ENCODE measurements at regions of chr22 and their contacts with region 1.

Region 1: DNA sequence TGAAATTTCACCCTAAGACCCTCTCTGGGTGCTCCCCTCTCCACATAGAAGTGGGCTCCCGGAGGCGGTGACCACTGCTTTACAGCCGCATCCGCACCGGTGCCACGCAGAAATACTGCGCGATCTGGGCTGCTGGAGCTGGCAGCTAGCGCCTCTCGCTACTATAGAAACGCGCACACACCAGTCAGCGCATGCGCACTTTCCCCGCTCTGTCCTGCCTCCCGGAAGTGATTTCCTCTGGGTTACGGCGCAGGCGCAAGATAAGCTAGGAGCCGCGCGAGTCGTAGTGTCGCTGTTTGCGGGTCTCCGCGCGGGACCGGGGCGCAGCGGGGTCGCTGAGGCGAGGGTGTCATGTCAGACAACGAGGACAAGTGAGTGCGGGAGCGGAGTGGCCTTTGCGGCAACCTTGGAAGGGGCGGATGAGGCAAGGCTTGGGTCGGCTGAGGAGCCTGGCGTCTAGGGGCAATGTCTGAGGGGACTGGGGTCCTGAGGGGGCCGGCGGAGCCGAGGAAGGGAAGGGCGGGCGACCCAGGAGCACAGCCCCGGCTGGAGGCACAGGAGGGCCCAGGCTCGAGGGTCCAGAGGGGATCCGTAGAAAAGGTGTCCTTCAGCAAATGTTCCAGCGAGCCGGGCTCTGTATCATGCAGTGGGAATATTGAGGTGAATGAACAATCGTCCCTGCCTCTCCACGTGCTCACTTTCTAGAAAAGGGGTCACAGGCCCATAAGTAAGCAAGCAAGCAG is at the starts of genes C22orf23 and POLR2F:
- DNase-seq: peak; percentile 91 to 99 (median 96)
- ATAC-seq: peak; percentile 96
- H3K4me3 ChIP-seq: peak within 1 kb of the TSS; percentile 95
- H3K4me3 Mint-ChIP-seq: peak within 1 kb of the TSS; percentile 100
- H3K27ac ChIP-seq: peak within 1 kb of the TSS; percentile 11 to 41
- H3K27ac Mint-ChIP-seq: peak within 1 kb of the TSS; percentile 92
- H3K4me1 ChIP-seq: peaks cover 25% of the 10 kb centered on the region
- H3K4me1 Mint-ChIP-seq: peaks cover 50% of the 10 kb centered on the region
- H3K27me3 ChIP-seq: peaks cover 5 to 7% of the 10 kb centered on the region in 2 experiments
- H3K27me3 Mint-ChIP-seq: peaks cover 19% of the 10 kb centered on the region
- CTCF ChIP-seq: no peak
- total RNA-seq, gene C22orf23: not detected
- total RNA-seq, gene POLR2F: 20.2 to 21.1 TPM

Region 2: DNA sequence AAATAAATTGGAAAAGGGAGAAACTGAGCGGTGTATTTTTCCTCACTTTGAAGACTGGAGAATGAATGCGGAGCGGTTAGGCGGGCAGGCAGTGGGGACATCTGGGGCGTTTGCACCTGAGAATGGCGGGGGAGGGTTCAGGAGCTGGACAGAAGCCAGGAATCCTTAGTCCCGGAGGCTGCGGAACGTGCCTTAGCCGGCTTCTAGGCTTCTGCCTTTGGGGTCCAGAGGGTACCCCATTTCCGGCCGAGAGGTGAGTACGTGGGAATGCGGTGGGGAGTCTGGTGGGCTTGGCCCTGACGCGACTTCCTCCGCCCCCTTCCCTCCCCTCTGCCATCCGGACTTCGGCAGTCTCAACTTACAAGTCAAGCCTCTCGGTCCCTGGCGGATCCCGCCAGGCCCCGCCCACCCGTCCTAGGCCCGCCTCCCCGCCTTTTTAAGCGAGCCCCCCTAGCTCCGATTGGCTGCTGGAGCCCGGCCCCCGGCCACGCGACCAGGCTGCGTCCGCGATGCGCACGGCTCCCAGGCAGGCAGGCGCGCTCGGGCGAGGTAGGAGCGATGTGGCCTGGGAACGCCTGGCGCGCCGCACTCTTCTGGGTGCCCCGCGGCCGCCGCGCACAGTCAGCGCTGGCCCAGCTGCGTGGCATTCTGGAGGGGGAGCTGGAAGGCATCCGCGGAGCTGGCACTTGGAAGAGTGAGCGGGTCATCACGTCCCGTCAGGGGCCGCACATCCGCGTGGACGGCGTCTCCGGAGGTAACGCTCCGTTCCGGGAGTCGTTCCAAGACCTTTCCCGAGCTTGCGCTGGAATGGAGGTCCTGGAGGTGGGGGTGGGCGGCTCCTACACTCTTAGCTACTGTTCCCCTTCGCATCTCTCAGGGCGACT is 146.0 kb before region 1 on chr22 and contains the start of gene GCAT:
- CTCF ChIA-PET with region 1: no interaction called
- POLR2A ChIA-PET with region 1: interaction called, 5 read pairs
- intact Hi-C with region 1: loop called in 1 of 2 experiments (anchors 5 kb)
- DNase-seq: peak; percentile 61 to 96 (median 79)
- ATAC-seq: peak; percentile 81
- H3K4me3 ChIP-seq: peak within 1 kb of the TSS; percentile 58
- H3K4me3 Mint-ChIP-seq: peak within 1 kb of the TSS; percentile 84
- H3K27ac ChIP-seq: no peak within 1 kb of the TSS
- H3K27ac Mint-ChIP-seq: no peak within 1 kb of the TSS
- H3K4me1 ChIP-seq: peaks cover 61% of the 10 kb centered on the region
- H3K4me1 Mint-ChIP-seq: peaks cover 46% of the 10 kb centered on the region
- H3K27me3 ChIP-seq: peaks cover 50 to 66% of the 10 kb centered on the region in 2 experiments
- H3K27me3 Mint-ChIP-seq: peaks cover 43% of the 10 kb centered on the region
- CTCF ChIP-seq: no peak
- total RNA-seq, gene GCAT: 1.4 to 1.8 TPM

Region 3: GRCh38 chr22:37849089-37849751 is 104.4 kb before region 1 on chr22 and contains the start of gene EIF3L:
- CTCF ChIA-PET with region 1: no interaction called
- POLR2A ChIA-PET with region 1: interaction called, 4 read pairs
- intact Hi-C with region 1: loop called in 1 of 2 experiments (anchors 5 kb)
- DNase-seq: peak; percentile 77 to 92 (median 84)
- ATAC-seq: peak; percentile 63
- H3K4me3 ChIP-seq: peak within 1 kb of the TSS; percentile 83
- H3K4me3 Mint-ChIP-seq: peak within 1 kb of the TSS; percentile 90
- H3K27ac ChIP-seq: peak within 1 kb of the TSS; percentile 78 to 89
- H3K27ac Mint-ChIP-seq: peak within 1 kb of the TSS; percentile 97
- H3K4me1 ChIP-seq: peaks cover 31% of the 10 kb centered on the region
- H3K4me1 Mint-ChIP-seq: peaks cover 51% of the 10 kb centered on the region
- H3K27me3 ChIP-seq: no peaks in the 10 kb centered on the region
- H3K27me3 Mint-ChIP-seq: no peaks in the 10 kb centered on the region
- CTCF ChIP-seq: no peak
- total RNA-seq, gene EIF3L: 525 to 541 TPM

Region 4: GRCh38 chr22:37905534-37906363 is 47.9 kb before region 1 on chr22 and contains the start of gene MICALL1:
- CTCF ChIA-PET with region 1: interaction called, 3 read pairs
- POLR2A ChIA-PET with region 1: interaction called, 10 read pairs
- intact Hi-C with region 1: loop called in 1 of 2 experiments (anchors 5 kb)
- DNase-seq: peak; percentile 31 to 88 (median 69)
- ATAC-seq: peak; percentile 78
- H3K4me3 ChIP-seq: peak within 1 kb of the TSS; percentile 60
- H3K4me3 Mint-ChIP-seq: peak within 1 kb of the TSS; percentile 91
- H3K27ac ChIP-seq: peak within 1 kb of the TSS; percentile 55 to 64
- H3K27ac Mint-ChIP-seq: peak within 1 kb of the TSS; percentile 87
- H3K4me1 ChIP-seq: peaks cover 22% of the 10 kb centered on the region
- H3K4me1 Mint-ChIP-seq: peaks cover 28% of the 10 kb centered on the region
- H3K27me3 ChIP-seq: no peaks in the 10 kb centered on the region
- H3K27me3 Mint-ChIP-seq: no peaks in the 10 kb centered on the region
- CTCF ChIP-seq: no peak
- total RNA-seq, gene MICALL1: 16.9 to 20.7 TPM

Region 5: GRCh38 chr22:38114484-38115398 is 161.1 kb after region 1 on chr22:
- CTCF ChIA-PET with region 1: no interaction called
- POLR2A ChIA-PET with region 1: no interaction called
- intact Hi-C with region 1: no loop called
- DNase-seq: peak; percentile 50 to 83 (median 71)
- ATAC-seq: peak; percentile 95
- H3K4me3 ChIP-seq: no peak overlapping the region
- H3K4me3 Mint-ChIP-seq: no peak overlapping the region
- H3K27ac ChIP-seq: no peak overlapping the region
- H3K27ac Mint-ChIP-seq: no peak overlapping the region
- H3K4me1 ChIP-seq: peaks cover 8% of the 10 kb centered on the region
- H3K4me1 Mint-ChIP-seq: peaks cover 4% of the 10 kb centered on the region
- H3K27me3 ChIP-seq: no peaks in the 10 kb centered on the region
- H3K27me3 Mint-ChIP-seq: no peaks in the 10 kb centered on the region
- CTCF ChIP-seq: peak; percentile 90